ENCODE measurements at regions of chr7 and their contacts with region 1.

Region 1: GRCh38 chr7:100632951-100633717 is 8.2 kb downstream of the TFR2 start:
- H3K4me3 Mint-ChIP-seq: peak overlapping the region; percentile 87
- H3K27ac Mint-ChIP-seq: peak overlapping the region; percentile 86
- H3K4me1 Mint-ChIP-seq: peaks cover 18% of the 10 kb centered on the region
- H3K27me3 Mint-ChIP-seq: peaks cover 36% of the 10 kb centered on the region

Region 2: GRCh38 chr7:100691676-100692577 is 58.8 kb after region 1 on chr7:
- intact Hi-C with region 1: loop called (anchors 5 kb)
- H3K4me3 Mint-ChIP-seq: peak overlapping the region; percentile 98
- H3K27ac Mint-ChIP-seq: no peak overlapping the region
- H3K4me1 Mint-ChIP-seq: peaks cover 51% of the 10 kb centered on the region
- H3K27me3 Mint-ChIP-seq: peaks cover 12% of the 10 kb centered on the region